Endothelial cell of umbilical vein (primary cell): ENCODE measurements at regions of chr17 and their contacts with region 1.

Region 1: DNA sequence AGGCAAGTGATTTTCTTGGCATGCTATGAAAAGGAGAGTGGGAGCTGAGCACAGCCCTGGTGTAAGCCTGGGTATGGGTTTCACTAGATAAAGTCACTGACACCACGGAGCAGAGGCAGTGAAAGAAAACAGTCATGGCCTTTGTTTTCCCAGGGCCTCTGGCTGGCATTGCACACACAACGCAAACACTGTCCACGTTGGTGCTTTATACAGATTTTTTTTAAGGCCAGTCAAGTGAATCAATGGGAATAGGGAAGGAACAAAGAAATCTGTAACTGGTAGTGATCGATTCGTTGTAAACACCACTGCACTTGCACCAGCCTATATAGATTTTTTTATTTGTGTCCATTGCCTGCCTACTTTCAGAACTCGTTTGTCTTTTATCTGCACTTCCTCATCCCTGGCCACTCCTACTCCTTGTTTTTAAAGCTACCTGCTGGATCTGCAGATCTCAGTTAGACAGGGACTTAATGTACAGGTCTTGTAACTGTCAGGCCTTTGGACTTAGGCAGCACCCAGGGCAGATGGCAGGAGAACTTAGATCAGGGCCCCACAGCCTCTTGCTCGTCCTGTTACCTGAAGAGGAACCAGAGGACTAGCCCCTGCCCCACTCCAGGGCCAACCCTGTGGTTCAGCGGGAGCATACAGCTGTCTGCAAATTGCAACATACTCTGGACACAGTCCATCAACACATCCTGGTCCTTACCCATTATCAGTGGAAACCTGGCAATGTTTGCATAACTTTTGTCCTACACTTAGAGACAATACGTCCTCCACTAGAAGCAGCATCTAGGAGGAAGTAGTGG is 10.6 kb upstream of the TMIGD1 start:
- DNase-seq: peak; percentile 68
- H3K4me3 ChIP-seq: no peak overlapping the region
- H3K27ac ChIP-seq: no peak overlapping the region
- H3K4me1 ChIP-seq: peaks cover 26% of the 10 kb centered on the region
- H3K27me3 ChIP-seq: no peaks in the 10 kb centered on the region
- CTCF ChIP-seq: no peak
- POLR2A ChIP-seq: no peak

Region 2: DNA sequence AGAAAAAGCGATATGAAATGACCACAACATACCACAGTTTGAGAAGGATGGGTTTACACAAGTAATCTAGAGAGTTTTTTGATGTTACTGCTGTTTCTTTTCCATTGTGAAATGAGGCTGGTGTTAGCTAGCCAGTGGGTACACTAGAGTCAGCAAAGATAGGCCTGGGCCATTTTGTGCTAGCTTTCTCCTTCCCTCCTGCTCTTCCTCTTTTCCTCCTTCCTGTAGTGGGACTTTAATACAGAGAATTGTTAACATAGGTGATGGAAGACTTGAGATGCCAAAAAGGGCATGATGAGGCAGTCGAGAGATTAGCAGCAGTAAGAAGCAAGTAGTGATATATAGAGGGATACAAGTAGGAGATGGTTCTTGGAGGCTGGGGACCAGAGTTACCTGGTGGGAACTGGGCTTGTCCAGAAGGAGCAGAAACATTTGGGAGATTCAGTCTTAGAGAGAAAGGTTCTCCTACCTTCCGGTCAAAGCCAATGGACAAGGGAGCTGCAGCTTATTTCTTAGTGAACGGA is 220.2 kb before region 1 on chr17:
- CTCF ChIA-PET with region 1: interaction called, 11 read pairs
- POLR2A ChIA-PET with region 1: no interaction called
- dilution Hi-C with region 1: no loop called
- intact Hi-C with region 1: no loop called
- DNase-seq: no peak
- H3K4me3 ChIP-seq: no peak overlapping the region
- H3K27ac ChIP-seq: no peak overlapping the region
- H3K4me1 ChIP-seq: peaks cover 4% of the 10 kb centered on the region
- H3K27me3 ChIP-seq: no peaks in the 10 kb centered on the region
- CTCF ChIP-seq: no peak
- POLR2A ChIP-seq: no peak

Region 3: GRCh38 chr17:30278032-30278431 is 66.5 kb before region 1 on chr17:
- CTCF ChIA-PET with region 1: no interaction called
- POLR2A ChIA-PET with region 1: no interaction called
- dilution Hi-C with region 1: no loop called
- intact Hi-C with region 1: no loop called
- DNase-seq: peak; percentile 85
- H3K4me3 ChIP-seq: no peak overlapping the region
- H3K27ac ChIP-seq: no peak overlapping the region
- H3K4me1 ChIP-seq: no peaks in the 10 kb centered on the region
- H3K27me3 ChIP-seq: no peaks in the 10 kb centered on the region
- CTCF ChIP-seq: peak; percentile 46 to 55
- POLR2A ChIP-seq: no peak

Region 4: DNA sequence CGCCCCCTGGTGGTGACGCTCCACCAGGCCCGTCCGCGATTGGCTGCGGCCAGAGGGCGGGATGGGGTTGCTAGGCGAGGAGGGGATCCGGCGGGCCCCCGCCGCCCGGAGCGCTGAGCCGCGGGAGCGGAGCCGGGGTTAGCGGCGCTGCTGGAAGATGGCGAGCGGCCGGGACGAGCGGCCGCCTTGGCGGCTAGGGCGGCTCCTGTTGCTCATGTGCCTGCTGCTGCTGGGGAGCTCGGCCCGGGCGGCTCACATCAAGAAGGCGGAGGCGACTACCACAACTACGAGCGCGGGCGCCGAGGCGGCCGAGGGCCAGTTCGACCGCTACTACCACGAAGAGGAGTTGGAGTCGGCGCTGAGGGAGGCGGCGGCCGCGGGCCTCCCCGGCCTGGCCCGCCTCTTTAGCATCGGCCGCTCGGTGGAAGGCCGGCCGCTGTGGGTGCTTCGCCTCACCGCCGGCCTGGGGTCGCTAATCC is 34.4 kb after region 1 on chr17 and contains the start of gene CPD:
- CTCF ChIA-PET with region 1: interaction called, 14 read pairs
- POLR2A ChIA-PET with region 1: interaction called, 3 read pairs
- dilution Hi-C with region 1: no loop called
- intact Hi-C with region 1: loop called (anchors 2 kb)
- DNase-seq: peak; percentile 95
- H3K4me3 ChIP-seq: peak within 1 kb of the TSS; percentile 71 to 92 (median 86)
- H3K27ac ChIP-seq: peak within 1 kb of the TSS; percentile 32
- H3K4me1 ChIP-seq: peaks cover 23% of the 10 kb centered on the region
- H3K27me3 ChIP-seq: peaks cover 2 to 3% of the 10 kb centered on the region in 2 experiments
- CTCF ChIP-seq: no peak
- POLR2A ChIP-seq: peak; percentile 97
- total RNA-seq, gene CPD: 63.6 and 68.0 TPM in 2 replicates

Region 5: GRCh38 chr17:30477083-30477773 is 132.7 kb after region 1 on chr17 and contains the start of gene GOSR1:
- CTCF ChIA-PET with region 1: interaction called, 29 read pairs
- POLR2A ChIA-PET with region 1: no interaction called
- dilution Hi-C with region 1: no loop called
- intact Hi-C with region 1: loop called (anchors 1 kb)
- DNase-seq: peak; percentile 97
- H3K4me3 ChIP-seq: peak within 1 kb of the TSS; percentile 57 to 100 (median 90)
- H3K27ac ChIP-seq: peak within 1 kb of the TSS; percentile 85
- H3K4me1 ChIP-seq: peaks cover 12% of the 10 kb centered on the region
- H3K27me3 ChIP-seq: peaks cover 0 to 4% of the 10 kb centered on the region in 2 experiments
- CTCF ChIP-seq: peak; percentile 78 to 93
- POLR2A ChIP-seq: peak; percentile 88
- total RNA-seq, gene GOSR1: 41.0 and 43.8 TPM in 2 replicates

Region 6: GRCh38 chr17:30495586-30495985 is 151.1 kb after region 1 on chr17:
- CTCF ChIA-PET with region 1: no interaction called
- POLR2A ChIA-PET with region 1: no interaction called
- dilution Hi-C with region 1: no loop called
- intact Hi-C with region 1: no loop called
- DNase-seq: peak; percentile 14
- H3K4me3 ChIP-seq: no peak overlapping the region
- H3K27ac ChIP-seq: no peak overlapping the region
- H3K4me1 ChIP-seq: no peaks in the 10 kb centered on the region
- H3K27me3 ChIP-seq: no peaks in the 10 kb centered on the region
- CTCF ChIP-seq: no peak
- POLR2A ChIP-seq: no peak